ENCODE measurements at regions of chr4 and their contacts with region 1.

Region 1: GRCh38 chr4:109424093-109424841 is 9.3 kb upstream of the SEC24B start:
- DNase-seq: no peak
- H3K4me3 ChIP-seq: no peak overlapping the region
- H3K27ac ChIP-seq: no peak overlapping the region
- H3K4me1 ChIP-seq: peaks cover 0 to 3% (median 0%) of the 10 kb centered on the region in 4 donors
- H3K27me3 ChIP-seq: no peaks in the 10 kb centered on the region
- CTCF ChIP-seq: no peak
- EP300 ChIP-seq: no peak
- POLR2A ChIP-seq: no peak

Region 2: DNA sequence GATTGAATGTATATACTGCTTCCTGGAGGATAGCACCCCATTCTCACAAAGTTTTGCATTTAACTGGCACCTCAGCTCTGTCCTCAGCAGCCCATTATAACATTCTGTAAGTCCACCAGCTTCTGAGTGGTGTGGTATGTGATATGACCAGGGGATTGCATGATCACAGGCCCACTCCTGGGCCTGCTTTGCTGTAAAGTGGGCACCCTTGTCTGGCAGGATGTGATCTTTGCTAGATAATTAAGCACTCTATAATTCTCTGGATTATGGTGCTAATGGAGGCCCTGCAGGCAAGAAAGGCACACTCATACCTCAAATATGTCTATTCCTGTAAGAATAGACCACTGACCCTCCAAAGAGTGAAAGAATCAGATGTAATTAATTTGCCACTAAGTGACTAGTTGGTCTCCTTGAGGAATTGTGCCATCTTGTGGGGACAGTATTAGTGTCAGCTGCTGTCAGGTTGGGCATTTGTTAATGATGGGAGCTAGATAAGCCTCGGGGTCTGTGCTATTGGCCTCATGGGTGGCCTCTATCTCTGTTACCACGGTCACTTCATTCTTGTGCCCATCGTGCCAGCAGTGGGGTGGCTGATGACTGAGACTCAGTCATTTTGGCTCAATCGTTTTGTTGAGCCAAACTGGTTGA is 379.8 kb after region 1 on chr4:
- in situ Hi-C with region 1: loop called in 2 of 4 experiments (anchors 10 kb)
- intact Hi-C with region 1: no loop called
- DNase-seq: peak; percentile 8
- H3K4me3 ChIP-seq: no peak overlapping the region
- H3K27ac ChIP-seq: no peak overlapping the region
- H3K4me1 ChIP-seq: peaks cover 0 to 11% (median 3%) of the 10 kb centered on the region in 4 donors
- H3K27me3 ChIP-seq: no peaks in the 10 kb centered on the region
- CTCF ChIP-seq: peak; percentile 19 to 38 (median 28)
- EP300 ChIP-seq: no peak
- POLR2A ChIP-seq: no peak

Region 3: GRCh38 chr4:109977854-109978501 is 553.7 kb after region 1 on chr4:
- in situ Hi-C with region 1: loop called (anchors 10 to 25 kb)
- intact Hi-C with region 1: loop called (anchors 10 kb)
- DNase-seq: no peak
- H3K4me3 ChIP-seq: no peak overlapping the region
- H3K27ac ChIP-seq: no peak overlapping the region
- H3K4me1 ChIP-seq: peaks cover 0 to 9% (median 0%) of the 10 kb centered on the region in 4 donors
- H3K27me3 ChIP-seq: no peaks in the 10 kb centered on the region
- CTCF ChIP-seq: peak; percentile 53 to 69 (median 60)
- EP300 ChIP-seq: no peak
- POLR2A ChIP-seq: no peak